Activated naive CD4-positive, alpha-beta T cell treated with anti-CD3 and anti-CD28 coated beads for 36 hours (primary cell): ENCODE measurements at regions of chr1 and their contacts with region 1.

Region 1: GRCh38 chr1:38026592-38027200 is 14.2 kb downstream of the UTP11 start:
- DNase-seq: peak; percentile 80
- H3K4me3 Mint-ChIP-seq: no peak overlapping the region
- H3K27ac Mint-ChIP-seq: no peak overlapping the region
- H3K4me1 Mint-ChIP-seq: peaks cover 52% of the 10 kb centered on the region
- H3K27me3 Mint-ChIP-seq: no peaks in the 10 kb centered on the region

Region 2: GRCh38 chr1:37807555-37808368 is 218.9 kb before region 1 on chr1 and contains the starts of genes C1orf122 and YRDC:
- CTCF ChIA-PET with region 1: no interaction called
- intact Hi-C with region 1: loop called (anchors 5 kb)
- DNase-seq: peak; percentile 92
- H3K4me3 Mint-ChIP-seq: peak within 1 kb of the TSS; percentile 95
- H3K27ac Mint-ChIP-seq: peak within 1 kb of the TSS; percentile 93
- H3K4me1 Mint-ChIP-seq: peaks cover 40% of the 10 kb centered on the region
- H3K27me3 Mint-ChIP-seq: no peaks in the 10 kb centered on the region
- total RNA-seq, gene C1orf122: 12.8 to 14.2 TPM
- total RNA-seq, gene YRDC: 31.6 to 31.7 TPM

Region 3: GRCh38 chr1:38037221-38037939 is 10.7 kb after region 1 on chr1:
- CTCF ChIA-PET with region 1: interaction called, 11 read pairs
- intact Hi-C with region 1: no loop called
- DNase-seq: peak; percentile 38
- H3K4me3 Mint-ChIP-seq: no peak overlapping the region
- H3K27ac Mint-ChIP-seq: no peak overlapping the region
- H3K4me1 Mint-ChIP-seq: no peaks in the 10 kb centered on the region
- H3K27me3 Mint-ChIP-seq: peaks cover 29% of the 10 kb centered on the region

Region 4: DNA sequence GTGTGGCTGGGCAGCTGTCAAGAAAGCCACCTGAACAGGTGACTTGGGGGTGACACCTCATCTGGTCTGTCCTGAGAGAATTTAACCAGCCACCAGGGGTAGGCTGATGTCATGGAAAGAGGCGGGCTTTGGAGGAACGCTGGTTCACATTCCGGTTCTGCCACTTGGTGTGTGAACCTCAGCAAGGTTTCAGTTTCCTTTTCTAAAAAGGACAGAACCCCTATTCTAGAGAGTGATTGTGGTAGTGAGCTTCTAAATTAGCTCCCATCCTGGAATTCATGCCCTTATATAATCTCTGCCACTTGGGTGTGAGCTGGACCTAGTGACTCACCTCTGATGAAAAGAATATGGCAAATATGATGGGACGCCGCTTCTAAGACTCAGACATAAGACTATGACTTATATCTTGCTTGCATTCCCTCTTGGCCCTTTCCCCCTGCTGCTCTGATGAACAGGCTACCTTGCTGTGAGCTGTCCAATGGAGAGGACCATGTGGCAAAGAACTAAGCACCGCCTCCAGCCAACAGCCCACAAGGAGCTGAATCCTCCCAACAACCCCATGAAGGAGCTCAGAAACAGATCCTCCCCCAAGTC is 500.8 kb after region 1 on chr1:
- CTCF ChIA-PET with region 1: interaction called, 3 read pairs
- intact Hi-C with region 1: loop called (anchors 1 kb)
- DNase-seq: peak; percentile 86
- H3K4me3 Mint-ChIP-seq: no peak overlapping the region
- H3K27ac Mint-ChIP-seq: peak overlapping the region; percentile 43
- H3K4me1 Mint-ChIP-seq: peaks cover 21% of the 10 kb centered on the region
- H3K27me3 Mint-ChIP-seq: peaks cover 2% of the 10 kb centered on the region

Region 5: GRCh38 chr1:38586993-38587646 is 560.4 kb after region 1 on chr1:
- CTCF ChIA-PET with region 1: no interaction called
- intact Hi-C with region 1: loop called (anchors 2 kb)
- DNase-seq: peak; percentile 68
- H3K4me3 Mint-ChIP-seq: no peak overlapping the region
- H3K27ac Mint-ChIP-seq: no peak overlapping the region
- H3K4me1 Mint-ChIP-seq: peaks cover 13% of the 10 kb centered on the region
- H3K27me3 Mint-ChIP-seq: peaks cover 3% of the 10 kb centered on the region

Region 6: GRCh38 chr1:38852780-38853179 is 826.1 kb after region 1 on chr1:
- CTCF ChIA-PET with region 1: interaction called, 3 read pairs
- intact Hi-C with region 1: loop called (anchors 2 kb)
- DNase-seq: peak; percentile 46
- H3K4me3 Mint-ChIP-seq: peak overlapping the region; percentile 26
- H3K27ac Mint-ChIP-seq: peak overlapping the region; percentile 78
- H3K4me1 Mint-ChIP-seq: peaks cover 38% of the 10 kb centered on the region
- H3K27me3 Mint-ChIP-seq: no peaks in the 10 kb centered on the region